ENCODE measurements at regions of chr1 and their contacts with region 1.

Region 1: DNA sequence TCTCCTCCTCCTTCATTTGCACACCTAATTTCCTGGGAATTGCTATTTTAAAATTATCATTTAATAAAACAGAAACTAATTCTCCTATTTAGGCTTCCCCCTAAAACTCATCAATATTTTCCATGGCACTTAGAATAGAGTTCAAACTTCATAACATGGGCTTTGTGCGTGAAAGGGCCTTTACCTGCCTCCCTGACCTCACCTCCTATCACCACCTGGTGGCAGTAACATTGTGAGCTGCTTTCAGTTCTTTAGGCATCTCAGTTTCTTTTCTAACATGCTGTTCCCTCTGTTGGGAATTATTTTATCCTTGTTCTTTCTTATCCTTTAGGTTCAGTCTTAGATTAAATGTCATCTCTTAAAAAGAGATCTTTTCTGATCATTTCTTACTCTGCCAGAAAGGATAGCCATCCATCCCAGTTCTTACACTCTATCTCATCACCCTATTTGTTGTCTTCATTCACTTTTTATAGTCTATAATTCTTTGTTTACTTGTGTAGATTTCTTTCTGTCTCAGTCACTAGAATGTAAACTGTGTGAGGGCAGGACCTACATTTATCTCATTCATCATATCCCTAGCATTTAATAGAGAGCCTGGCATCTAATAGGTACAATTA is 133.8 kb upstream of the KIAA1614 start:
- DNase-seq: peak; percentile 39 to 43
- H3K4me3 ChIP-seq: no peak overlapping the region
- H3K4me3 Mint-ChIP-seq: no peak overlapping the region
- H3K27ac Mint-ChIP-seq: no peak overlapping the region
- H3K4me1 ChIP-seq: 0 out of 2 replicates have a peak, but pooled peaks cover under 1% of the 10 kb centered on the region
- H3K4me1 Mint-ChIP-seq: peaks cover 24% of the 10 kb centered on the region
- H3K27me3 ChIP-seq: no peaks in the 10 kb centered on the region
- H3K27me3 Mint-ChIP-seq: no peaks in the 10 kb centered on the region
- CTCF ChIP-seq: peak; percentile 53 to 81

Region 2: DNA sequence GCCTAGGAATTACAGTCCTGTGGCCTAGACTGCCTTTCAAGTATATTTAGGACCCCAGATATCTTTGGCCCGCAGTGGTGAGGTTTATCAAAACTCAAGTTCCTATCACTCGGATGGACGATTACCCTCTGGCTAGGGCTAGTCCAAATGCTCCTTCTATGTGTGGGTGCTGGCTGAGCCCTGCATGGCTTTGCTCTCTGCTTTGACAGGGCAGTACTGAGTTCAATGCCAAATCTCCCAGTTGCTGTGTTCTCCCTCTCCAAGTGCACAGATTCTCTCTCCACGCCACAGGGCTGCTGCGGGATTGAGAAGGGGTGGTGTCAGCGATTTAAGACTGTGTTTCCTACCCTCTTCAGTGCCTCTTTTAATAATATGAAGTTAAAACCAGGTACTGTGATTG is 451.8 kb before region 1 on chr1:
- CTCF ChIA-PET with region 1: no interaction called
- POLR2A ChIA-PET with region 1: no interaction called
- intact Hi-C with region 1: no loop called
- DNase-seq: no peak
- H3K4me3 ChIP-seq: no peak overlapping the region
- H3K4me3 Mint-ChIP-seq: no peak overlapping the region
- H3K27ac Mint-ChIP-seq: no peak overlapping the region
- H3K4me1 ChIP-seq: no peaks in the 10 kb centered on the region; the same call in 1 of the 2 replicates
- H3K4me1 Mint-ChIP-seq: no peaks in the 10 kb centered on the region
- H3K27me3 ChIP-seq: no peaks in the 10 kb centered on the region
- H3K27me3 Mint-ChIP-seq: no peaks in the 10 kb centered on the region
- CTCF ChIP-seq: no peak

Region 3: DNA sequence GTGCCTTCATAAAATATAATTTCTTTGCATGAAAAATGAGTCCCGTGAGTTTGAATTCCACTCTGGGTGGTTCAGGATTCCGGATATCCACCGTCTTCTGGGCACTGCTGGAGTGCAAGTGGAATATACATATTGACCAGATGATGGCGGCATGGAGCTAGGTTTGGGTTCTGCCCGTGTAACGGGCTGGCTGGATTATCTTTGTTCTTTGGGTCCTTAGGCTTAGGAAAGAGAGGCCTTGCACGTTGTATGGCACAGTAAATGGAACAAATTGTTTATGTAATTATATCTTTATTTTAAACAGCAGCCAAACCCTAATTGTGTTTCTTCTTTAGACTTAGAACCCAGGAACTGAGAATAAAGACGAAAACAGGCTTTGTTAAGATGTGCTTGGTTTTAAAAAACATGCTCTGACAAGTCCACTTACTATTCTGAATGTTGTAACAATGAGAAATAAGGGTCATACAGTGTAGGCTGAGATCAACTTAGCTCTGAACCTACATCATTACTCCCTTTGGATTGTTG is 263.0 kb before region 1 on chr1:
- CTCF ChIA-PET with region 1: no interaction called
- POLR2A ChIA-PET with region 1: no interaction called
- intact Hi-C with region 1: loop called (anchors 1 kb)
- DNase-seq: peak; percentile 68 to 80
- H3K4me3 ChIP-seq: no peak overlapping the region
- H3K4me3 Mint-ChIP-seq: no peak overlapping the region
- H3K27ac Mint-ChIP-seq: no peak overlapping the region
- H3K4me1 ChIP-seq: 0 out of 2 replicates have a peak, but pooled peaks cover 7% of the 10 kb centered on the region
- H3K4me1 Mint-ChIP-seq: peaks cover 16% of the 10 kb centered on the region
- H3K27me3 ChIP-seq: no peaks in the 10 kb centered on the region
- H3K27me3 Mint-ChIP-seq: no peaks in the 10 kb centered on the region
- CTCF ChIP-seq: peak; percentile 80 to 82

Region 4: DNA sequence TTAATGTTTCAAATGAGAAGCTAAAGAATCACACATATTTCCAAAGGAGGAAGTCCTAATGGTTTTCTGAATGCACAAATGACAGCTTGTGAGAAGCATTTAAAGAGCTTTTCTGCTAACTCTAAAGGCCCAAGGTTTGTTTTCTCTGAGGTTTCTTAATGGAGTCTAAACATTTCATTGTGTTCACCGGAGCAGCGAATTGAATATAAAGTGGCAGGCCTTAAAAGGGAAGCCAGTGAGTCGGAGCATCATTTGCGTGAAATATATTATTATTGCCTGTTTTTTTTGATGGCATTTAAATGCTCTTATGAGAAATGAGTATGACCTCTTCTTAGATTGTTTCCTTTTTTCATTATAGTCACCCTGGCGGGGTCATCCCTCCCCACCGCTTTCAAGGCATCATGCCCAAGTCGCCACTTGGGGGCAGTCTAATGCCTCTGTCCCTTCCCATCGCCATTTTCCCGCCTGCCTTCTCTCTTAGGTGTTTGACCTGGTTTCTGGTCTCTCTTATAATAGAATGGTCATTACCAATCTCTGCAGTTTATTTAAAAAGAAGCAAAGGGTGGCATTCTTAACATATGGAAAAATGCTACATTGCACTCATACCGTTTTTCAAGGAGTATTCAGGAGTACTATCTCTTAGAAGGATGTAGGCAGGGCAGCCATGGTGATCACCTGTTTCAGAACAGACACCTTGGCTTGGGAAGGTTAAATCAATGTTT is 245.5 kb before region 1 on chr1:
- CTCF ChIA-PET with region 1: no interaction called
- POLR2A ChIA-PET with region 1: no interaction called
- intact Hi-C with region 1: loop called (anchors 5 kb)
- DNase-seq: peak; percentile 59 to 77
- H3K4me3 ChIP-seq: no peak overlapping the region
- H3K4me3 Mint-ChIP-seq: no peak overlapping the region
- H3K27ac Mint-ChIP-seq: no peak overlapping the region
- H3K4me1 ChIP-seq: peaks cover 6% of the 10 kb centered on the region; the same call in 1 of the 2 replicates
- H3K4me1 Mint-ChIP-seq: peaks cover 10% of the 10 kb centered on the region
- H3K27me3 ChIP-seq: no peaks in the 10 kb centered on the region
- H3K27me3 Mint-ChIP-seq: no peaks in the 10 kb centered on the region
- CTCF ChIP-seq: peak; percentile 72 to 74